ENCODE measurements at regions of chr20 and their contacts with region 1.

Region 1: DNA sequence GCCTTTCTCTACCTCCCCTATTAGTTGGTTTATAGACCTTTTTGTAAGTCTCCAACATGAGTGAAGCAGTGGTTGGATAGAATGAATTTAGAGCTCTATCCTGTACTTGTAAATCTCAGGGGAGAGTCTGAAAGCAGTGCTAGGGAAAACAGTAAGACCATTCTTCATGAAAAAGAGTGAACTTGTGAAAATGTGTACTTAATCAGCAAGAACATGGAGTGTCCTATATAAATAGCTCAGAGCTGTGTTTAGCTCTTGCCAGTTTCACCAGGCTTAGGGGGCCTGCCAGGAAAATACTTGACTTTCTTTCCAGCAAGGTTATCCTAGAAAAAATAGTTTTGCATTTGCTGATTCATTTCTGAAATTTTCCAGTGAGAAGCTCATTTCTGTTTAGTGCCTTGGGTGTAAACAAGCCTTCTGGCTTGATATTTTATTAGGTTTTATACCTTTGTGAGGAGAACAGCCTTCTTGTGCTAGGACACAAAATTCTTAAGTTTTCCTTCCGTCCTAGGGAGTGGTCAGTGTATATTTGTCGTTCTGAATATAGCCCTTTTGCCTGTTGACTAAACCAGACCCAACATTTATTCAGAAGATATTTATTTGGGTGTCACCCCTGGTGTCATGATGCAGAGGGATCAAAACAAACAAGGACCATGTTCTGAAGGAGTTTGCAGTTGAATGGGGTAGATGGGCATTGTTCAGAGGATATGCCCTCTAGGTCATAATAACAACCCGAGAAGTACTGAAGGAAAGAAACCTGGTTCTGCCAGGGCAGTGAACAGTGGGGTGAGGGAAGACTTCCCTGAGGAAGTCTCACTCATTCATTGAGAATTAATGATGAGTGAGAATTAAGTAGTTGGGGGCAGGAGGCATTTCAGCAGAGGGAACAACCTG is 7.6 kb downstream of the ARFGEF2 start:
- DNase-seq: peak; percentile 91
- H3K4me3 ChIP-seq: peak overlapping the region in 1 of 3 experiments; percentile 41
- H3K27ac ChIP-seq: peak overlapping the region; percentile 92
- H3K4me1 ChIP-seq: peaks cover 51% of the 10 kb centered on the region
- H3K27me3 ChIP-seq: no peaks in the 10 kb centered on the region
- CTCF ChIP-seq: no peak
- POLR2A ChIP-seq: no peak

Region 2: DNA sequence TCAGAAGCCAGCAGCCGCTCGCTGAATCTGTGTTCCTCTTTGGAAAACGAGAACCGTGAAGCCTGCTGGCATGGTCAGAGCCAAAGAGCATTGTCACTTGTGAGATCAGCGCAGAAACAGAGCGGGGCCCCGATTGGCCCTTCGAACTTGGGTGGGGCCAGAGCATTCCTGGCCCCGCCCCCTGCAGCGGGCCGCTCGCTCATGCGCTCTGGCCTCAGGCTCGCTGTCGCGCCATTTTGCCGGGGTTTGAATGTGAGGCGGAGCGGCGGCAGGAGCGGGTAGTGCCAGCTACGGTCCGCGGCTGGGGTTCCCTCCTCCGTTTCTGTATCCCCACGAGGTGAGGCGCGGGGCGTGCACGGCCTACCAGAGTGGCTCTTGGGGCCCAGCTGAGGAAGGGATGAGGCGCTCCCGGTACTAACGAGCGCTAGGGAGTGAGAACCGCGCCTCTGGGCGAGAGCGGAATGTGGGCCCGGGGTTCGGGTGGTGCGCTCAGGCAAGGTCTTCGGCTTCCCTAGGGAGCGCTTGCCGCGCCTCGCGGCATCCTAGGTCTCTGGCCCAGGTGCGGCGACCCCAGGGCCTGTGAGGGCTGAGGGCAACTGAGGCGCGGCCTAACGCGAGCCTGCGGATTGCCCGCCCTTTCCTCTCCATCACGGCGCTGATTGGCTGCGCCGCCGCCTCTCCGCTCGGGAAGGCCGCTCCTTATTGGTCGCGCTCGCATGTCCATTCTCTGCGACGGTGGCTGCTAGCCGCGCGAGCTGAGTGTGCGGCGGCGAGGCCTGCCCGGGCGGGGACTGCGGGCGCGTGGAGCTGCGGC is 117.2 kb after region 1 on chr20 and contains the start of gene CSE1L:
- CTCF ChIA-PET with region 1: no interaction called
- POLR2A ChIA-PET with region 1: no interaction called
- dilution Hi-C with region 1: no loop called
- intact Hi-C with region 1: loop called (anchors 5 kb)
- DNase-seq: peak; percentile 95
- H3K4me3 ChIP-seq: peak within 1 kb of the TSS; percentile 64 to 87 (median 86)
- H3K27ac ChIP-seq: peak within 1 kb of the TSS; percentile 81
- H3K4me1 ChIP-seq: peaks cover 24% of the 10 kb centered on the region
- H3K27me3 ChIP-seq: no peaks in the 10 kb centered on the region
- CTCF ChIP-seq: no peak
- POLR2A ChIP-seq: peak; percentile 95
- total RNA-seq, gene CSE1L: 109 and 118 TPM in 2 replicates

Measured in endothelial cell of umbilical vein (primary cell).